ENCODE measurements at regions of chr18 and their contacts with region 1.

Region 1: DNA sequence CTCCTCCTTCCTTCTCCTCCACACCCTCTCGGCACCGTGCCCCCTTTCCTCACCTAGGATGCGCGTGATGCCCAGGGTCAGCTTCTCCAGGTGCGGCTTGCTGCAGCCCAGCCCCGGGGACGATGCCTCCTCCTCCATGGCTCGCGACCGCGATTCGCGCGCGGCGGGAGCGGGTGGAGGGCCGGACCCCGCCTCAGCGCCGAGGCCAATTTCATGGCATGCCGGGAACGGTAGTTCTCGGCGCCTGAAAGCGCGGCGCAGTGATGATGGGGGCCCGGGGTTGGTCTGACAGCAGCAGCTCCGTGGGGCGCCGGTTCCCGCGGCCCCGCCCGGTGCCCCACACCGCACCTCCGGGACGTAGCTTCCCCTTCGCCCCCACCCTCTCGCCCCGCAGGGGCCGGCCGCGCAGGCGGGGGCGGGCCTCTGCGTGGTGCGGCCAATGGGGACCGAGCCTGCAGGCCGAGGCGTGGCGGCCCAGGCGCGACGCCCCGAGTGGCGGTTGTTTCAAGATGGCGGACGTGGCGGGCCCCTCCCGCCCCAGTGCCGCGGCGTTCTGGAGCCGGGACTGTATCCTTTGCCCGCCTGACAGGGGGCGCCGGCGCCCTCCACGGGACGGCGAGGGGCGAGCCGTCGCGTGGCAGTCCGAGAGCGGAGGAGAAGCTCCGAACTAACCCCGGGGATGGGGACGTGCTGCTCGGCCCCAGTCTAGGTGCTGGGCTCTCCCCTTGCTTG is at the starts of genes KIAA1328 and TPGS2:
- DNase-seq: peak; percentile 88
- H3K4me3 Mint-ChIP-seq: peak within 1 kb of the TSS; percentile 86
- H3K27ac Mint-ChIP-seq: peak within 1 kb of the TSS; percentile 94
- H3K4me1 Mint-ChIP-seq: peaks cover 51% of the 10 kb centered on the region
- H3K27me3 Mint-ChIP-seq: no peaks in the 10 kb centered on the region
- total RNA-seq, gene KIAA1328: 6.7 and 8.2 TPM in 2 replicates
- total RNA-seq, gene TPGS2: 68.5 and 72.6 TPM in 2 replicates

Region 2: GRCh38 chr18:35972197-35973052 is 856.4 kb before region 1 on chr18 and contains the start of gene RMP24:
- intact Hi-C with region 1: loop called (anchors 10 kb)
- DNase-seq: peak; percentile 90
- H3K4me3 Mint-ChIP-seq: peak within 1 kb of the TSS; percentile 98
- H3K27ac Mint-ChIP-seq: peak within 1 kb of the TSS; percentile 98
- H3K4me1 Mint-ChIP-seq: peaks cover 53% of the 10 kb centered on the region
- H3K27me3 Mint-ChIP-seq: no peaks in the 10 kb centered on the region

Region 3: DNA sequence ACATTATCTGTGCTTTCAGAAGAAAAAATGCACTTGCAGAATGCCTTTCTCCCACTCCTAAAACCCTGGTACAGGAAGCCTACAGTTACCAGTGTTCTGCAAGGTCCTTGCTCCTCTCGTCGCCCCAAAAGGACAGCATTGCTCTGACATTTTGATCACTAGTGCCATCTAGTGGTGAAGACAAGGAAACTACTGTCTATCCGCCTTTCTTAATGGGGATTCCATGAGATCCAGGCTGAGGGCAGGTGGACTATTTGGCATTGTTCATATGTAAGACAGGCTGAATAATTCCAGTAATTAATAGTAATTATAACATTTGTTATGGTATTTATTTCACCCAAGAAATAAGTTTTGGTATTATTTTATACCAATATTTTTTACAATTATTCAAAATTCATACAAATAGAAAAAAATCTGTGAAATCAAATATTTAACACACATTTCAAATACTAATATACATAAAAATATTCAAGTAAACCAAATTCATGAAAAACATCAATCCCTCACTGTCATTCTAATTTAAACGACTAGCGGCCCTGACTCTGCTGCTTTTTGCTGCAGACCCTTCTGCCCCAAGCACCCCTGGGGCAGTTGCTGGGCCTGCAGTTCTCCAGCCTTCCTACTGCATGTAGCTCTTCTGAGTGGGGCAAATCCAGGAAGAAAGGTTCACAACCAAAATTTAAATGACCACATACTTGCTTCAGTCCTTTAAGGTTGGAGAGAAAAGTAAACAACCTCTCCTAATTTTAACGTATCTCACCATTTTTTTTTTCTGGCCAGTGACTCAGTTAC is 19.0 kb before region 1 on chr18:
- intact Hi-C with region 1: loop called (anchors 2 kb)
- DNase-seq: peak; percentile 12
- H3K4me3 Mint-ChIP-seq: no peak overlapping the region
- H3K27ac Mint-ChIP-seq: no peak overlapping the region
- H3K4me1 Mint-ChIP-seq: peaks cover 19% of the 10 kb centered on the region
- H3K27me3 Mint-ChIP-seq: no peaks in the 10 kb centered on the region

Region 4: DNA sequence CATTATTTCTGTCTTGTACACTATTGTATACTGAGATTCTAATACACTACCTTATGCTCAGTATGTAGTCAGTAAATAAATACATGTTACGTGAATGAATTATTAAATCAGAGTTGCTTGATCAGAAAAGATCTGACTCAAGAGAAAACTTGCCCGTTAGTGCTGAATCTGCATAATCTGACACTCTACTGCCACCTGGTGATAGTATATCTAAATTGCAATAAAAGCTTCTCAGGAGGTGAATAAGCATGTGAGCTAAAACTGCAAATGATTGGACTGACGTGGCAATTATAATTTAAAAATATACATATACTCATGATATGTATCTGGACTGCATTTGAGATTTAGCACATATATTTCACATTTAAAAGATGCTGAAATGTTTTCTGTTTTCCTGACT is 70.5 kb after region 1 on chr18:
- intact Hi-C with region 1: loop called (anchors 2 kb)
- DNase-seq: no peak
- H3K4me3 Mint-ChIP-seq: no peak overlapping the region
- H3K27ac Mint-ChIP-seq: no peak overlapping the region
- H3K4me1 Mint-ChIP-seq: no peaks in the 10 kb centered on the region
- H3K27me3 Mint-ChIP-seq: no peaks in the 10 kb centered on the region

Region 5: GRCh38 chr18:37006742-37007141 is 177.9 kb after region 1 on chr18:
- intact Hi-C with region 1: loop called (anchors 2 kb)
- DNase-seq: no peak
- H3K4me3 Mint-ChIP-seq: no peak overlapping the region
- H3K27ac Mint-ChIP-seq: no peak overlapping the region
- H3K4me1 Mint-ChIP-seq: peaks cover 10% of the 10 kb centered on the region
- H3K27me3 Mint-ChIP-seq: no peaks in the 10 kb centered on the region